ENCODE measurements at regions of chr18 and their contacts with region 1.

Region 1: DNA sequence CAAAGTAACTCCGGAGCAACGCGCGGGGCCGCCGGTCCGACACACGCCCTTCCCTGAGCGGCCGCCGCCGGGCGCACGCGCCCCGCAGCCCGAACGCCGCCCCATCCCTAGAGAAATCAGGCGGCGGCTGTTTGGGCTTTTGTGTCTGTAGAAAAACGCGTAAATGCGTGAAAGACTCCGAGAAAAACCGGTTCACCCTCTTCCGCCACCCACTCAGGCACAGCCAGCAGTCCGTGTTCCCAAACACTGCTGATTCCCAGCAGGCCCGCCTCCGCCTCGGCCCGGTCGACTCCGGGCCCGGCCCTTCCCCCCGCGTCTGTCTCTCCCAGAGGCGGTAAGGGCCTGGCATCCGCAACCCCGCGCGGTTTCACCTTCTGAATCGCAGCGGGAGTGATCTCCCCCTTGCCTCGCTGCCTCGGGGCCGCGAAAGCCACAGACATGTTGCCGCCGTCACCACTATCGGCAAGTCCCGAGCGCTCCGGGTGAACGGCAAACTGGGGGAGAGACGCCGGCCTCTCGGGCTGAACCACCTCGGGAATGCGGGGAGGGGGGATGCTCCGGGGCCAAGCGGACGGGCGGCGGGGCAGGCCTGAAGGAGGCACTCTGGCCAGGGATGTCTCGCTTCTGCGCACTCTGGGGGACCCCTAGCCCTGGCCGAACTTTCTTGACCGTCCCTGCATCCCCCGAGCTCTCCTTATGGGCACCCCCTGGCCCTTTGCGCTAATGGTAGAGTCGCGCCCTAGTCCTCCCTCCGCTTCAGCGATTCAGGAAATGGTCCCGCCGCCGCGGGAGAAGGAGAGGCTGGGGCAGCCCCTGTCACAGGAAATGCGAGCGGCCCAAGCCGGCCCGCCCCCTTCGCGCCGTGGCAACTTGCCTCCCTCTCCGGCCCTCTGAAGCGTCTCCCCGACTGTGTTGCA is at the start of gene SS18:
- DNase-seq: peak; percentile 76 to 96 (median 86)
- ATAC-seq: peak; percentile 80
- H3K4me3 ChIP-seq: peak within 1 kb of the TSS; percentile 65
- H3K4me3 Mint-ChIP-seq: peak within 1 kb of the TSS; percentile 99
- H3K27ac ChIP-seq: peak within 1 kb of the TSS; percentile 91 to 96
- H3K27ac Mint-ChIP-seq: peak within 1 kb of the TSS; percentile 98
- H3K4me1 ChIP-seq: peaks cover 15% of the 10 kb centered on the region
- H3K4me1 Mint-ChIP-seq: peaks cover 56% of the 10 kb centered on the region
- H3K27me3 ChIP-seq: no peaks in the 10 kb centered on the region
- H3K27me3 Mint-ChIP-seq: no peaks in the 10 kb centered on the region
- CTCF ChIP-seq: no peak
- total RNA-seq, gene SS18: 40.4 to 41.7 TPM

Region 2: DNA sequence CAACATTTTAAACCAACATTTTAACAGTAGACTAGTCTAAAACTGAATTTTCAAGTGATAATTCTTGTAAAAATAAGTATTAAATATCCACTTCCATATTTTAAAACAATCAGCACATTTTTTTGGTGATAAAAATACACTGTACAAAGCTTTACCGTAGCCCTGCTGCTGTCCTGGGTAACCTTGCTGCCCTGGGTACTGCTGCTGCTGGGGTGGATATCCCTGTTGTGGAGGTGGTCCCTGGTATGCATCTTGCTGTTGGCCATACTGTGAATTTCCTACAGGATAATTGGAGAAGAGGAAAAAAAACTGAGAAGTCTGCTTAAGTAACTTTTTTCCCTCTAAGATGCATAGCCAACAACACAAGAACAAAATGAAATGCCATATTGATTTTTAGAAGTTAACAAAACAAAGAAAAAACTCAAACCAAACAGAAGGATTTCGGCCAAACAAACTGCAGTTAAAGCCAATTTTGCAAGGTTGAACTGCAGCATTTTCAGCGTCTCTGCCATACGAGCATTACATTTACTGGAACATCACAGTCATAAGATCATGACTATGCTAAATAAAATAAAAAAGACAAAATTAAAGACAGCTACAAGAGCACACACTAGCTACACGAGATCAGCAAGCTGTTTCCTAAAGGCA is 55.4 kb before region 1 on chr18:
- CTCF ChIA-PET with region 1: no interaction called
- POLR2A ChIA-PET with region 1: no interaction called
- intact Hi-C with region 1: loop called in 1 of 2 experiments (anchors 10 kb)
- DNase-seq: no peak
- ATAC-seq: no peak
- H3K4me3 ChIP-seq: no peak overlapping the region
- H3K4me3 Mint-ChIP-seq: no peak overlapping the region
- H3K27ac ChIP-seq: no peak overlapping the region
- H3K27ac Mint-ChIP-seq: no peak overlapping the region
- H3K4me1 ChIP-seq: no peaks in the 10 kb centered on the region
- H3K4me1 Mint-ChIP-seq: peaks cover 4% of the 10 kb centered on the region
- H3K27me3 ChIP-seq: no peaks in the 10 kb centered on the region
- H3K27me3 Mint-ChIP-seq: no peaks in the 10 kb centered on the region
- CTCF ChIP-seq: no peak

Region 3: DNA sequence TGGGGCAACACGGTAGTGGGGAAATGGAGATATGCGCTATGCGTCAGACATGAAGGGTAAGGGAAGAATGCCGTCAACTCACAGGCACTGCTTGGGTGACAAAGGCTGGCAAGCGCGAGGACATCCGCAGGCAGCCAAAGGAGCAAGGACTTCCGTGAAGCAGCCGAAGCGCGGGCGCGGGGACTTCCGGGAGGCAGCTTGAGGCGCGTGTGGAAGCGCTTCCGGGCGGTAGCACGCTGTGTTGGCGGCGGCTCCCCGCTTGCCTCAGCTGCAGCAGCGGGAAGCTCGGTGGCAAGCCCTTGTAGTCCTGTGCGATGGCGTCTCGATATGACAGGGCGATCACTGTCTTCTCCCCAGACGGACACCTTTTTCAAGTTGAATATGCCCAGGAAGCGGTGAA is 43.3 kb after region 1 on chr18 and contains the start of gene PSMA8:
- CTCF ChIA-PET with region 1: no interaction called
- POLR2A ChIA-PET with region 1: interaction called, 8 read pairs
- intact Hi-C with region 1: loop called in 1 of 2 experiments (anchors 2 kb)
- DNase-seq: peak; percentile 15 to 82 (median 51)
- ATAC-seq: peak; percentile 86
- H3K4me3 ChIP-seq: peak within 1 kb of the TSS; percentile 53
- H3K4me3 Mint-ChIP-seq: peak within 1 kb of the TSS; percentile 78
- H3K27ac ChIP-seq: peak within 1 kb of the TSS; percentile 24 to 50
- H3K27ac Mint-ChIP-seq: peak within 1 kb of the TSS; percentile 81
- H3K4me1 ChIP-seq: no peaks in the 10 kb centered on the region
- H3K4me1 Mint-ChIP-seq: no peaks in the 10 kb centered on the region
- H3K27me3 ChIP-seq: no peaks in the 10 kb centered on the region
- H3K27me3 Mint-ChIP-seq: no peaks in the 10 kb centered on the region
- CTCF ChIP-seq: no peak
- total RNA-seq, gene PSMA8: 0.27 TPM in 1 of 2 experiments, not detected in the other

Region 4: GRCh38 chr18:26159353-26159752 is 69.0 kb after region 1 on chr18:
- CTCF ChIA-PET with region 1: no interaction called
- POLR2A ChIA-PET with region 1: no interaction called
- intact Hi-C with region 1: loop called in 1 of 2 experiments (anchors 1 kb)
- DNase-seq: peak in 3 of 14 experiments; percentile 18 to 29 (median 28)
- ATAC-seq: peak; percentile 51
- H3K4me3 ChIP-seq: no peak overlapping the region
- H3K4me3 Mint-ChIP-seq: no peak overlapping the region
- H3K27ac ChIP-seq: no peak overlapping the region
- H3K27ac Mint-ChIP-seq: no peak overlapping the region
- H3K4me1 ChIP-seq: no peaks in the 10 kb centered on the region
- H3K4me1 Mint-ChIP-seq: no peaks in the 10 kb centered on the region
- H3K27me3 ChIP-seq: no peaks in the 10 kb centered on the region
- H3K27me3 Mint-ChIP-seq: no peaks in the 10 kb centered on the region
- CTCF ChIP-seq: peak; percentile 45

Region 5: DNA sequence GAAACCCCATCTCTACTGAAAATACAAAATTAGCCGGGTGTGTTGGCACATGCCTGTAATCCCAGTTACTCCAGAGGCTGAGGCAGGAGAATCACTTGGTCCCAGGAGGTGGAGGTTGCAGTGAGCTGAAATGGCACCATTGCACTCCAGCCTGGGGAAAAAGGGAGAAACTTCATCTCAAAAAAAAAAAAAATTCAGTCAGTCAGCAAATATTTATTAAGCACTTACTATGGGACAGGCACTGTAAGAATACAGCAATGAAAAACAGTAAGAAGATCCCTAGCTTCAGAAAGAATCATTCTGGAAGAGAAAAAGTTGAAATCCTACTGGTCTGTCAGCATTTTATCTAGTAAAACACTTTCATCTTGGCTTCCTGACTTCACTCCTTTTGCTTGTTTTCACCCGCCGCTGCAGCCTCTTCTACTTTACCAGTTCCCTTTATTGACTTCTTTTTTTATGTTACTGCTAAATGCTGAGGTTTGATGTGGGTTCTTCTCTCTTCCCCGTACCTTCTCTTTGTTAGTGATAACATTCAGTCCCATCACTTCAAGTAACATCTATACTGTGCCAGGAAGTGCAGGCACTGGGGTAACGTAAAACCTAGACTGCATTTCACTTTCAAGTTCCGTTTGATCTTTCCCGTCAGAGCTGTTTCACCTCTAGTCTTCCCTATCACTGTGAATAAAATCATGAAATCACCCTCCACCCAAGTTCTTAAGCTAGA is 125.0 kb after region 1 on chr18:
- CTCF ChIA-PET with region 1: no interaction called
- POLR2A ChIA-PET with region 1: interaction called, 5 read pairs
- intact Hi-C with region 1: loop called in 1 of 2 experiments (anchors 1 kb)
- DNase-seq: peak; percentile 22 to 86 (median 53)
- ATAC-seq: peak; percentile 98
- H3K4me3 ChIP-seq: peak overlapping the region; percentile 34
- H3K4me3 Mint-ChIP-seq: peak overlapping the region; percentile 49
- H3K27ac ChIP-seq: peak overlapping the region in 1 of 2 donors; percentile 50
- H3K27ac Mint-ChIP-seq: peak overlapping the region; percentile 77
- H3K4me1 ChIP-seq: peaks cover 18% of the 10 kb centered on the region
- H3K4me1 Mint-ChIP-seq: peaks cover 26% of the 10 kb centered on the region
- H3K27me3 ChIP-seq: no peaks in the 10 kb centered on the region
- H3K27me3 Mint-ChIP-seq: no peaks in the 10 kb centered on the region
- CTCF ChIP-seq: no peak

Region 6: DNA sequence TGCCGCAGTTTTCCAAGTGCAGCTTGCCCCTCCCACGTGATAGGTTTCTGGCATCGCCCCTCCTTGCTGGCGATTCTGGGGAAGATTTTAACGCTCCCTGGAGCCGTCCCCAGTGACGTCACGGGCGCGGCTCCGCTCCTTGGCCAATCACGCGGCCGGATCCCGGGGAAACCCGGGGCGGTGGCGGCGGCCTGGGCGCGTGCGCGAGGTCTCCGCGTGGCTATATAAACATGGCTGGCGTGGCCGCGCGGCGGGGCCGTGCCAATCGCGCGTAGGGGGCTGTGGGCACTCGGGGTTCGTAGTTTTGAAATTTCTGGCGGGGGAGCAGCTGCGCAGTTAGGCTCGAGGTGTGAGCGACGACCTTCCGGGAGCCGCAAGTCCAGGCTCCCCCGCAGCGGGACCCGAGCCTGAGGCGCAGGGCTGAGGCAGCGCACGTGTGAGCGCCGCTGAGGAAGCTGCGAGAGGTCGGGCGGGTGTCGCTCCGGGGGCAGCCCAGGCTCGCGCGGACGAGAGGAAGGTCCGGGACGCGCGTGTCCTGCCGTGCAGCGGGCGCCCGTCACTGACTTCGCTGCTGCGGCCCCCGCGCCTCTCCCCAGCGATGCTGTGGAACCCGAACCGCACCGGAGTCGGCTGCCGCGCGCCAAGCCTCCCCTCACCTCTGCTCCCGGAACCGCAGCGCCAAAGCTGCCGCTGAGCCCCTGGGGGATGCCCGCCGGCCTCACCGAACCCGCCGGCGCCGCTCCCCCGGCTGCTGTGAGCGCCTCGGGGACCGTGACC is 136.0 kb after region 1 on chr18 and contains the start of gene TAF4B:
- CTCF ChIA-PET with region 1: no interaction called
- POLR2A ChIA-PET with region 1: interaction called, 13 read pairs
- intact Hi-C with region 1: loop called (anchors 2 kb)
- DNase-seq: peak; percentile 85 to 96 (median 90)
- ATAC-seq: peak; percentile 87
- H3K4me3 ChIP-seq: peak within 1 kb of the TSS; percentile 73
- H3K4me3 Mint-ChIP-seq: peak within 1 kb of the TSS; percentile 98
- H3K27ac ChIP-seq: peak within 1 kb of the TSS; percentile 80 to 87
- H3K27ac Mint-ChIP-seq: peak within 1 kb of the TSS; percentile 99
- H3K4me1 ChIP-seq: peaks cover 11% of the 10 kb centered on the region
- H3K4me1 Mint-ChIP-seq: peaks cover 45% of the 10 kb centered on the region
- H3K27me3 ChIP-seq: no peaks in the 10 kb centered on the region
- H3K27me3 Mint-ChIP-seq: no peaks in the 10 kb centered on the region
- CTCF ChIP-seq: no peak
- total RNA-seq, gene TAF4B: 13.7 to 14.1 TPM

Region 7: GRCh38 chr18:26813043-26813442 is 722.7 kb after region 1 on chr18:
- CTCF ChIA-PET with region 1: no interaction called
- POLR2A ChIA-PET with region 1: no interaction called
- intact Hi-C with region 1: no loop called
- DNase-seq: no peak
- ATAC-seq: no peak
- H3K4me3 ChIP-seq: no peak overlapping the region
- H3K4me3 Mint-ChIP-seq: no peak overlapping the region
- H3K27ac ChIP-seq: no peak overlapping the region
- H3K27ac Mint-ChIP-seq: no peak overlapping the region
- H3K4me1 ChIP-seq: no peaks in the 10 kb centered on the region
- H3K4me1 Mint-ChIP-seq: no peaks in the 10 kb centered on the region
- H3K27me3 ChIP-seq: no peaks in the 10 kb centered on the region
- H3K27me3 Mint-ChIP-seq: no peaks in the 10 kb centered on the region
- CTCF ChIP-seq: no peak